ENCODE measurements at regions of chr1 and their contacts with region 1.

Region 1: DNA sequence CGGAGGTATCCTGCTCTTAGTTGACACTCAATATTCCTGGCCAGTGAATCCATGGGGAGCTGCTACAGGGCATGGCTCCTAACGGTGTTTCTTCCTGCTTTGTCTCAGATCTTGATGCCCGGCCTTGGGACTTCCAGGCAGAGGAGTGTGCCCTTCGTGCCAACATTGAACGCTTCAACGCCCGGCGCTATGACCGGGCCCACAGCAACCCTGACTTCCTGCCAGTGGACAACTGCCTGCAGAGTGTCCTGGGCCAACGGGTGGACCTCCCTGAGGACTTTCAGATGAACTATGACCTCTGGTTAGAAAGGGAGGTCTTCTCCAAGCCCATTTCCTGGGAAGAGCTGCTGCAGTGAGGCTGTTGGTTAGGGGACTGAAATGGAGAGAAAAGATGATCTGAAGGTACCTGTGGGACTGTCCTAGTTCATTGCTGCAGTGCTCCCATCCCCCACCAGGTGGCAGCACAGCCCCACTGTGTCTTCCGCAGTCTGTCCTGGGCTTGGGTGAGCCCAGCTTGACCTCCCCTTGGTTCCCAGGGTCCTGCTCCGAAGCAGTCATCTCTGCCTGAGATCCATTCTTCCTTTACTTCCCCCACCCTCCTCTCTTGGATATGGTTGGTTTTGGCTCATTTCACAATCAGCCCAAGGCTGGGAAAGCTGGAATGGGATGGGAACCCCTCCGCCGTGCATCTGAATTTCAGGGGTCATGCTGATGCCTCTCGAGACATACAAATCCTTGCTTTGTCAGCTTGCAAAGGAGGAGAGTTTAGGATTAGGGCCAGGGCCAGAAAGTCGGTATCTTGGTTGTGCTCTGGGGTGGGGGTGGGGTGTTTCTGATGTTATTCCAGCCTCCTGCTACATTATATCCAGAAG is 16.7 kb downstream of the ALX3 start:
- DNase-seq: peak; percentile 63
- ATAC-seq: peak; percentile 69 to 81

Region 2: DNA sequence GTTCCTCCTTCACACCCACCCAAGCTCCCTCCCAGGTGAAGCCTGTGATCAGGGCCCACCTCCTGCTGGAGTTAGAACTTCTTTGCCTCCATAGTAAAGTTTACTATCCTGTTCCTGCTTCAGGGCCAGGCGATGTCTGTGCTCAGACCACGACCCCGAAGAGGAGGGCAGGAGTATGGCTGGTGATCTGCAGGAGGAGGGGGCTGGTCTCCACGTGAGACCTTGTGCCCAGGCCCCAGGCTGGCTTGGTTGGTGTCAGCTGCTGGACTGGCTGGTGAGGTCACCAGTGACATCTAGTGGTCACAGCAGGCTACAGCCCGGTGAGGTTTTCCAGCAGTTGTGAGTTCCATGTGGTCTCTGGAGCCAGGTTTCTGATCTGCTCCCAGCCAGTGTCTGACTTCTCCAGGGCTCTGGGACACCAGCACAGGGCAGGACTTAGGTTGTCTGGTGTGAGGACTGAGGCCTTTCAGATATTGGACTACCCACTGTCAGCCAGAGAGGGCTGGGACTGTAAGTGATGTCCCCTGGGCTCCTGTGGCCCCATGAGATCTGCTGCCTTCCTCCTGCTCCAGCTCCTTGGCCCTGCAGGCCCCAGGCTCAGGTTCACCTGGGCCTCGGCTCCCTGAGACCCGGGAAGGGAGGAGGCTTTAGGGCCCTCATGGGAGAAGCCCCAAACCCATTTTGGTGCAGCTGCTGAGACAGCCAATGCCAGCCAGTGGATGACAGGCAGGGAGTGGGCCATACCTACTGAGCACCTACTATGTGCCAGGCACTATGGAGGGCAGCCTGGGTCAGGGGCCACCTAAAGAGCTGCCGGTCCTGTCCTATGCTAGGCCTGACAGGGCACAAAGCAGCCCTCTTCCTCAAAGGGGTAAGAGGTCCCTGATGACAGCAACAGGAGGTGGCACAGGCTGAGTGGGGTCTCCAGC is 52.5 kb after region 1 on chr1:
- intact Hi-C with region 1: loop called (anchors 2 to 10 kb)
- DNase-seq: peak; percentile 72
- ATAC-seq: peak; percentile 85 to 90